Activated CD4-positive, alpha-beta memory T cell treated with anti-CD3 and anti-CD28 coated beads for 36 hours (primary cell): ENCODE measurements at regions of chr20 and their contacts with region 1.

Region 1: DNA sequence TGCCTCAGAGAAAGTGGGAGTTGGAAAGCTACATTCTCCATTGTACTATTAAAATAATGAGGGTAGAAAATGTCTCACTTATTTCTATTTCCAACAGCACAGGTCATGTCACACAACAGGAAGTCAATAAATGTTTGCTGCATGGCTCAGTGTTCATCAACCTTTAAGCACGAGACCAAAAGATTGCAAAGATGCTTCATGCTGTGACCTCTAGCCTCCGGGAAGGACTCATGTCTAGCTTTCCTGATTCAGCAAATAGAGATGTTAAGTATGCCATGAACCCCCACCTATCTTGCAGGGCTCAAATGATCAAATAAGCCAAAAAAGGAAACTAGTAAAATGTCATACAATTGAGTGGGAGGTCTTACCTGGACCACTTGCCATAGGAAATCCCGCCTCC is 57.4 kb downstream of the NCOA6 start:
- DNase-seq: no peak
- H3K4me3 Mint-ChIP-seq: no peak overlapping the region
- H3K27ac Mint-ChIP-seq: no peak overlapping the region
- H3K4me1 Mint-ChIP-seq: no peaks in the 10 kb centered on the region
- H3K27me3 Mint-ChIP-seq: no peaks in the 10 kb centered on the region

Region 2: GRCh38 chr20:34558320-34559218 is 209.5 kb before region 1 on chr20 and contains the start of gene MAP1LC3A:
- CTCF ChIA-PET with region 1: interaction called, 12 read pairs
- POLR2A ChIA-PET with region 1: no interaction called
- intact Hi-C with region 1: no loop called
- DNase-seq: peak; percentile 95
- H3K4me3 Mint-ChIP-seq: peak within 1 kb of the TSS; percentile 83
- H3K27ac Mint-ChIP-seq: peak within 1 kb of the TSS; percentile 80
- H3K4me1 Mint-ChIP-seq: peaks cover 16% of the 10 kb centered on the region
- H3K27me3 Mint-ChIP-seq: no peaks in the 10 kb centered on the region
- total RNA-seq, gene MAP1LC3A: 4.6 to 5.6 TPM

Region 3: DNA sequence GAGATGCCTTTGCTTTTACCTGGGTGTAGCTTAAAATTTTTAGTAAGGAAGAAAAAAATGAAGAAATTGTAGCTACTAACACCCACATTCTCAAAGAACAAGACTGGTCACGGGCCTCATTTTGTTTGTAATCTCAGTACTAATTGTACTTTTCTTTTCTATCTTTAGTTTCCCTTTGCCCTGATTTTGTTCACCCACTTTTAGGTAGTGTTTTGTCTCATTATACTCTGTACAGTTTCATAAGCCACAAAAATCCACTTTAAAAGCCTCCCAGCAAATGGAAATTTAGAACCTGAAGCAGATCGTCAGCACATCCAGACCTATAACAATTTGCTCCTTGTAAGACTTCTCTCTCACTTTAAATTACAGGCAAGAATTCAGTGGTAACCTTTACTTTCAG is 20.6 kb before region 1 on chr20:
- CTCF ChIA-PET with region 1: interaction called, 20 read pairs
- POLR2A ChIA-PET with region 1: no interaction called
- intact Hi-C with region 1: no loop called
- DNase-seq: no peak
- H3K4me3 Mint-ChIP-seq: no peak overlapping the region
- H3K27ac Mint-ChIP-seq: no peak overlapping the region
- H3K4me1 Mint-ChIP-seq: peaks cover 9% of the 10 kb centered on the region
- H3K27me3 Mint-ChIP-seq: no peaks in the 10 kb centered on the region

Region 4: DNA sequence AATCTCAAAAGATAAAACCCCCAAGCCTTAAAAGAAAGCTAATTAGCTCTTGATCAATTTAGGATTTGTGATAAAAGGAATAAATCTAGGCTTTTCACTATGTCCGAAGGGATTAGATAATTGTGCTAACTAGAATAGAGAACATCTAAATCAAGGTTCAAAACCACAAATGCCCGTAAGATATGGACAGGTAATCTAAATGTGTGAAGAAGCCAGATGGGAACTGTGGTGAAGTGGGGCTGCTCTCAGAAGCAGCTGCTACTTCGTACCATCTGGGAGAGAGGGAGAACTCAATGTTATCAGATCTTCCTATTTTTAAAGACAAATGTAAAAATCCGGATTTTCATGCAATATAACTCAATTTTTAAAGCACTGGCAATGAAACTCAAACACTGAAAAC is 13.1 kb after region 1 on chr20:
- CTCF ChIA-PET with region 1: interaction called, 42 read pairs
- POLR2A ChIA-PET with region 1: no interaction called
- intact Hi-C with region 1: no loop called
- DNase-seq: no peak
- H3K4me3 Mint-ChIP-seq: no peak overlapping the region
- H3K27ac Mint-ChIP-seq: no peak overlapping the region
- H3K4me1 Mint-ChIP-seq: peaks cover under 1% of the 10 kb centered on the region
- H3K27me3 Mint-ChIP-seq: no peaks in the 10 kb centered on the region